PC-9 (cell line): ENCODE measurements at regions of chr18 and their contacts with region 1.

Region 1: DNA sequence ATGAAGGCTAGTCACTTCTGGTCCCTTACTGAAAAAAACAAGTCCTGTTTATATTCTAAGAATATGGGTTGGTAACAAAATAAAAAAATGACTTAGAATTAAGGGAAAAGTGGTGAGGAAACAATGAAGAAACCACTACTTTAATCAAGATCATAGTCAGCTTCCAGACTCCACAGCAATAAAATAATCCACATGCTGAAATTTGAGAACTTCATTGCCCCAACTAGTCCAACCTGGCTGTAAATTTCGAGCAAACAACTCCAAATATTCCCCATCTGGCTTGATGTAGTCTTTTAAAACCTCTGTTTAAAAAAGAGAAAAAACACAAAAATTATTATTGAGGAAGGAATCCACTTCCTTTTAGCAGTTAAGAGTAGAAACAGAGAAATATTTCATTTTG is 32.5 kb downstream of the METTL4 start:
- DNase-seq: no peak
- H3K4me3 ChIP-seq: no peak overlapping the region
- H3K27ac ChIP-seq: no peak overlapping the region
- H3K4me1 ChIP-seq: peaks cover 6% of the 10 kb centered on the region; the same call in 1 of the 2 replicates
- H3K27me3 ChIP-seq: no peaks in the 10 kb centered on the region
- CTCF ChIP-seq: no peak

Region 2: GRCh38 chr18:1663879-1664705 is 874.8 kb before region 1 on chr18:
- CTCF ChIA-PET with region 1: no interaction called
- POLR2A ChIA-PET with region 1: no interaction called
- intact Hi-C with region 1: loop called (anchors 5 kb)
- DNase-seq: peak in 1 of 2 experiments; percentile 46
- H3K4me3 ChIP-seq: no peak overlapping the region
- H3K27ac ChIP-seq: no peak overlapping the region
- H3K4me1 ChIP-seq: no peaks in the 10 kb centered on the region
- H3K27me3 ChIP-seq: no peaks in the 10 kb centered on the region
- CTCF ChIP-seq: peak; percentile 80

Region 3: DNA sequence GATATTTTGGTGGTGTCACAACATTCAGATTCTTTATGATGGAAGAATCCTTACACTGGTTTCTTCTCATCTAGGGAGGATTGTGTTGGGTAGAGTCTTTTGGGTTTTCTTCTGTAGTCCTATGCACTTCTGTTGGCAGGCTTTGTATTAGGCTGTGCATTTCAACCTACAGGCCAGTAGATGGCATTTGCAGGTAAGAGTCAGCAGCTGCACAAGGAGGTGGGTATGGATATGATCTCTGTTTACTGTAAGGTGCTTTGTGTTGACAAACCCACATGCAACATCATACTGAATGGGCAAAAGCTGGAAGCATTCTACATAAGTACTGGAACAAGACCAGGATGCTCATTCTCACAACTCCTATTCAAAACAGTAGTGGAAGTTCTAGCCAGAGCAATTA is 624.4 kb before region 1 on chr18:
- CTCF ChIA-PET with region 1: no interaction called
- POLR2A ChIA-PET with region 1: no interaction called
- intact Hi-C with region 1: loop called (anchors 5 kb)
- DNase-seq: peak in 1 of 2 experiments; percentile 39
- H3K4me3 ChIP-seq: no peak overlapping the region
- H3K27ac ChIP-seq: no peak overlapping the region
- H3K4me1 ChIP-seq: peaks cover 7% of the 10 kb centered on the region
- H3K27me3 ChIP-seq: no peaks in the 10 kb centered on the region
- CTCF ChIP-seq: peak; percentile 71

Region 4: GRCh38 chr18:2173464-2173863 is 365.4 kb before region 1 on chr18:
- CTCF ChIA-PET with region 1: interaction called, 5 read pairs
- POLR2A ChIA-PET with region 1: no interaction called
- intact Hi-C with region 1: loop called (anchors 5 kb)
- DNase-seq: peak; percentile 53 to 73
- H3K4me3 ChIP-seq: no peak overlapping the region
- H3K27ac ChIP-seq: no peak overlapping the region
- H3K4me1 ChIP-seq: peaks cover 26% of the 10 kb centered on the region
- H3K27me3 ChIP-seq: no peaks in the 10 kb centered on the region
- CTCF ChIP-seq: no peak

Region 5: GRCh38 chr18:2337552-2338141 is 201.2 kb before region 1 on chr18:
- CTCF ChIA-PET with region 1: no interaction called
- POLR2A ChIA-PET with region 1: interaction called, 14 read pairs
- intact Hi-C with region 1: no loop called
- DNase-seq: no peak
- H3K4me3 ChIP-seq: no peak overlapping the region
- H3K27ac ChIP-seq: no peak overlapping the region
- H3K4me1 ChIP-seq: no peaks in the 10 kb centered on the region; the same call in 1 of the 2 replicates
- H3K27me3 ChIP-seq: no peaks in the 10 kb centered on the region
- CTCF ChIP-seq: peak; percentile 44; the same call in 1 of the 2 replicates

Region 6: DNA sequence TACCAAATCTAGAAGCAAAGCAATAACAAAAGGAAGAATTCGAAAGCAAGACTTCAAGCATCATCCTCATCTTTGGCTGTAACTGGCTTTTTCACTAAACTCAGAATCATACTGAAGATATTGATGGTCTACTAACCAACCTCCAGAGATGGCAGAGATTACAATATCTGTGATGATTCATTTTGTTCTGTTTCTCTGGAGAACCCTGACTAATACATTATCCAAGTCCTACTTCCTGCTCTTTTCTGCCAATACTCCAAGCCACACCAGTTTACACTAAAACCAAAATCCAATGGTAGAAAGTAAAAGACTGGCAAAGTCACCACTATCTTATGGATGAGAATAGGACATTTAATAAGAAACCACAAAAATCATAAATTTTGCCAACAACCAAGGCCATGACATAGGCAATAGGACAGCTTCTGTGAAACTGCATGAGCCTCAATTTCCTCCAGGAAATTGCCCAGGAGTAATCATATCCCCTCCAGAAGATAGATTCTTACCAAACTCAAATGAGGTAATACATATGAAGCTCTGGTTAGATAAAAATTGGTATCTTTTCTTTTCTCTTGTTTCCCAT is 127.4 kb before region 1 on chr18:
- CTCF ChIA-PET with region 1: interaction called, 10 read pairs
- POLR2A ChIA-PET with region 1: interaction called, 14 read pairs
- intact Hi-C with region 1: loop called (anchors 2 kb)
- DNase-seq: peak; percentile 12 to 75
- H3K4me3 ChIP-seq: no peak overlapping the region; the same call in 1 of the 2 replicates
- H3K27ac ChIP-seq: peak overlapping the region; percentile 70
- H3K4me1 ChIP-seq: peaks cover 34% of the 10 kb centered on the region
- H3K27me3 ChIP-seq: no peaks in the 10 kb centered on the region
- CTCF ChIP-seq: no peak

Region 7: GRCh38 chr18:2459886-2460285 is 79.0 kb before region 1 on chr18:
- CTCF ChIA-PET with region 1: no interaction called
- POLR2A ChIA-PET with region 1: no interaction called
- intact Hi-C with region 1: no loop called
- DNase-seq: no peak
- H3K4me3 ChIP-seq: no peak overlapping the region
- H3K27ac ChIP-seq: no peak overlapping the region
- H3K4me1 ChIP-seq: no peaks in the 10 kb centered on the region
- H3K27me3 ChIP-seq: no peaks in the 10 kb centered on the region
- CTCF ChIP-seq: no peak

Region 8: DNA sequence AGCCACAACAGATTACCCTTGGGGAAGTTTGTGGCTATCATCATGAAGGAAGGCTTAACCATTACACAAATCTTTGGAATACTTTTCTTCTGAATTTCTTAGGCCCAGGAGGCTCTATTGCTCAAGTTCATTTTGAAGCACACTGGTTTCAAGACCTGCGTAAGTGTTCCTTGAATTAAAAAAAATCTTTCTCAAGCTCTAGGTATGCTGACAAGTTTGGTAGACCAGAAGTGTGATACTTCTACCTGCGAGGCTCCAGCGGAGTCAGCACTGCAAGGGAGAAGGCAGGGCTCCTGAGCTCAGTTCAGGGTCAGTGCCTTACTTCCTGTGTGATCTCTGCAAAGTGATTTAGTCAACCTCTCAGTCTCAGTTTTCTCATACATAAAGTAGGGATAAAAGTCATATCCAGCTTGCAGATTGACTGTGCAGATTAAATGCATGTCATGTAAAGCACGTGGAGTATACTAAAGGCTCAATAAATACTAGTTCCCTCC is 1477.7 kb after region 1 on chr18:
- CTCF ChIA-PET with region 1: no interaction called
- POLR2A ChIA-PET with region 1: no interaction called
- intact Hi-C with region 1: no loop called
- DNase-seq: no peak
- H3K4me3 ChIP-seq: no peak overlapping the region
- H3K27ac ChIP-seq: no peak overlapping the region
- H3K4me1 ChIP-seq: no peaks in the 10 kb centered on the region
- H3K27me3 ChIP-seq: no peaks in the 10 kb centered on the region
- CTCF ChIP-seq: no peak